ENCODE measurements at regions of chr7 and their contacts with region 1.

Region 1: DNA sequence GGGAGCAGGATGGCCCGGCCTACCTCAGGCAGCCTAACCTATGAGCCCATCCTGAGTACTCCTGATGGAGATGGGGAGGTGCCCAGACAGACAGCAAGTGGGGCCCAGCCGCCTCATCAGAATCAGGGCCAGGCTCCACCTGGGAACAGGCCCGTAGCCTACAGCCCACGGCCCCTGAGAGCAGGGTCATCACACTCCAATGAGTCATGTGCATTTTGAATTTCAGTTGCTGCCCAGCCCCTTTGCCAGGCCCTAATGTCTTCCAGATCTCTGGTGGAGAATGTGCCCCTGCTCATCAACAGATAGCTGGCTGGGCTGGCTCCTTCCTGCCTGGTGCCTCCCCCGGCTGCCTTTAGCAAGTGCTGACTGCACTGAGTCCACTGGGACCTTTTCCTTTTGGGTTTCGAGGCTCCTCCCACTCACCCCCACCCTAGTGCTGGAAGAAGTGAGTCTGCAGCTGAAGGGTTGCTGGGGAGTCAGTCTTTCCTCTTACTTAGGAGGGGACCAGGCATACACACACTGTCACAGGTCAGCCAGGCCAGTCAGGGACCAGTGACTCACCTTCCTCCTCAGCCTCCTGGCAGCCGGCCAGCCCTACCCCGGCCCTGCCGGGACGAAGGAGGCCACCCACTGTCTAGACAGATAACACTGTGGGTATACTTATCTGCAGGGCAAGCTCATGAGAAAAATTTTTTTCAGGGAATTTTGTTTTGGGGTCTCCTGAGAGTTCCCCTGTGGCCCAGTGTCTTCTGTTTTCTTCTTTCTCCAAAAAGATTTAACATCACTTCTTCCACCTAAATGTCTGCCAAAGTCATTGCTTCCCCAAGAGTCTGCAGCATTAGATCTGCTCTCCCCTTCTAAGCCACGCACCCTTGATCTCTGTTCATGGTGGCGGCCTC is 9.1 kb upstream of the ASIC3 start:
- DNase-seq: peak; percentile 66
- ATAC-seq: peak; percentile 43

Region 2: DNA sequence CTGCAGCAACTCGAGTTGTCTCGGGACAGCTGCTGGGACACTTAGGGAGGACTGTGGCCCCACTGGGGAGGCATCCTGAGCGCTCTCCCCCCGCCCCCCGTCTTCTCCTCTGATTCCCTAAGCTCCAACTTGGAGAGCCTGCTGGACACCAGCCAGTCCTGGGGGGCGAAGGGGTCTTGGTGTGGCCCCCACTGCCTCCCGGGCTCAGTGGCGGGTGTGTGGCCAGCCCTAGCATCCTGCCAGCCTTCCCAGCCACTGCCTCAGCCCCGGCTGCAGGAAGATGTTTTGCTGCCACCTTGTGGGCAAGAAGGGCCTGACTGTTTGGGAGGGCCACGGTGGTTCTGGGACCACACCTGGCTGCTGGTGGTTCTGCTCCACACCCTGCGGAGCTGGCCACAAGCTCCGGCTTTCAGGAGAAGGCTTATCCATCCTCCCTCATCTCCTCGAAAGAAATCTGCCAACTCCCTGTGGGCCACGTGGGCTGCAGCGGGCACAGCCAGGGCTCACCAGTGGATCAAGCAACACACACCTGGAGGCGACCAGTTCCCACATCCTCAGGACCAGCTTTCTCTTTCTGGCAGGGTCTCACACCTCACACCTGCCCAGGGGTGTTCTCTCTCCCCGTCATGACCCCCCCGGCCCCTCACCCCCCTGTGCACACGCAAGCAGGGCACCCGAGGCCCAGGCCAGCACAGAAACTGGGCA is 71.9 kb after region 1 on chr7:
- intact Hi-C with region 1: loop called (anchors 10 kb)
- DNase-seq: peak; percentile 84
- ATAC-seq: peak; percentile 83